ENCODE measurements at regions of chr19 and their contacts with region 1.

Region 1: DNA sequence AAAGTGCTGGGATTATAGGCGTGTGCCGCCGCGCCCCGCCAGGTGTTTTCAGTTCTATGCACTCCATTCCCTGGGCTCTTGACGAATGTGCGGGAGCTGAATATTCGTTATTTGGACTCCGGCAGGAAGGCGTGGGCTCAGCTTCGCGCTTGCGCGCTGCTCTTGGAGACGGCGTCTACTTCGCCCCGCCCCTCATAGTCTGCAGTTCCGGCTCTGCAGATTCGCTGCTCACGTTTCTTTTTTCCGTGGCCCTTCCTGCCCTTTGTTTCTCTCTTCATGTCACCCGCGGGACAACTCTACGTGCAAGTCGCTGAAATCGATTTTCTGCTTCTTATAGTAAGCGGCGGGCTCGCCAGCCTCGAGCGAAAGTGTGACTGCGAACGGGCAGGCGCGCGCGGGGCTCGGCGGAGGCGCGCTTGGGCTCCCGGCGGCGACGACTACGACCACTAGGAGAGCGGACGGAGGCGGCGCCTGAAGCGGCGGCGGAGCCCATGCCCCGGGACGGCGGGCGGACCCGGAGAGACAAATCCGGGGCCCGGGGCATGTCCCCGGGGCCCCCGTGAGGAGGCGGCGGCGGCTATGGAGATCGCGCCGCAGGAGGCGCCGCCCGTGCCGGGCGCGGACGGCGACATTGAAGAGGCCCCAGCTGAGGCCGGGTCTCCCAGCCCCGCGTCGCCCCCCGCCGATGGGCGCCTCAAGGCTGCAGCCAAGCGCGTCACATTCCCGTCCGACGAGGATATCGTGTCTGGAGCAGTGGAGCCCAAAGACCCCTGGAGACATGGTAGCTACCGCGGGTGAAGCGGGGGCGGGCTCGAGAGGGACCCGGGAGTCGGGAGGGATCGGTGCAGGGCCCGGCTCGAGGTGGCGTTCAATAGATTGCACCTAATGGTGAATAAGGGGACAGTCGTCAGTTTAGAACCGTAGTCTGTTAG is at the start of gene PPP1R37:
- DNase-seq: peak; percentile 86 to 99 (median 92)

Region 2: GRCh38 chr19:45079063-45079910 is 13.7 kb before region 1 on chr19 and contains the start of gene GEMIN7:
- intact Hi-C with region 1: loop called (anchors 1 kb)
- DNase-seq: peak; percentile 69 to 98 (median 80)

Region 3: DNA sequence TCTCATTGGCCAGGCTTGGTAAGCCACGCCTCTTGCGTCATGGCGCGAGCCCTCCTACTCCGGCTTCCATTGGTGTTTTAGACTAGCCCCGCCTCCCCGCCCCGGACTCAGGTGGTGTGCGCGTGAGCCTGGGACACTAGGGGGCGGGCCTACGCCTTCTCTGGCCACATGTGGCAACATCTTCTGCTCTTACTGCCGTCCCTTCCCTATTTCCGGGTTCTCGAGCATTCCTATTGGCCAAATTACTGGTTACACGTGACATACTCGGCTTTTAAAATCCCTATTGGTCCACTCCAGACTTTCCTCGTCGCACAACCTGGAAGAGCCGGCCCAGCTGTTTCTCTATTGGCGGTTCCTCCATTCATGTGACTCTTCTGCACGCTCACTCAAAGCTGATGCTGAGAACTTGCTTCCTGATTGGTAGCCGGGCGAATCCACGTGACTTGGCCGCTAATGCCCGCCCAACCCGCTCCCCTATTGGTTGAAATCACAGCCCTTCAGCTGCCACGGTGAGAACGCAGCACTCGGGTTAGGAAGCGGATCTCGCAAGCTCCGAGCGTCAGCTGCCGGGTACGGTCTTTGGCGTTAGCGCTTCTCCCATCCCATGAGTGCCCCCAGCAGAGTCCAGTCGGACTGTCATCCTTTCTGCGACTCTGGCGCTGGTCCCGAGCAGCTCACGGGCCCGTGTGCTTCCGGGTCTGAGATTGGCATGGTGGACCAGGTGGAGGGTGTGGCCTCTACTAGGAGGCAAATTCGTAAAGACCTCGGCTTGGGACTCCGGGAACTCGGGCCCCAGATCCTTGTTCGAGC is 85.5 kb after region 1 on chr19 and contains the start of gene BLOC1S3:
- intact Hi-C with region 1: loop called (anchors 1 kb)
- DNase-seq: peak; percentile 99 to 100 (median 99)

Region 4: GRCh38 chr19:45250832-45251451 is 157.9 kb after region 1 on chr19 and contains the start of gene MARK4:
- intact Hi-C with region 1: loop called (anchors 5 kb)
- DNase-seq: peak in 7 of 10 donors; percentile 30 to 89 (median 49)

Measured in posterior cingulate gyrus (tissue), 11 donors.